Endothelial cell of umbilical vein (primary cell): ENCODE measurements at regions of chr7 and their contacts with region 1.

Region 1: DNA sequence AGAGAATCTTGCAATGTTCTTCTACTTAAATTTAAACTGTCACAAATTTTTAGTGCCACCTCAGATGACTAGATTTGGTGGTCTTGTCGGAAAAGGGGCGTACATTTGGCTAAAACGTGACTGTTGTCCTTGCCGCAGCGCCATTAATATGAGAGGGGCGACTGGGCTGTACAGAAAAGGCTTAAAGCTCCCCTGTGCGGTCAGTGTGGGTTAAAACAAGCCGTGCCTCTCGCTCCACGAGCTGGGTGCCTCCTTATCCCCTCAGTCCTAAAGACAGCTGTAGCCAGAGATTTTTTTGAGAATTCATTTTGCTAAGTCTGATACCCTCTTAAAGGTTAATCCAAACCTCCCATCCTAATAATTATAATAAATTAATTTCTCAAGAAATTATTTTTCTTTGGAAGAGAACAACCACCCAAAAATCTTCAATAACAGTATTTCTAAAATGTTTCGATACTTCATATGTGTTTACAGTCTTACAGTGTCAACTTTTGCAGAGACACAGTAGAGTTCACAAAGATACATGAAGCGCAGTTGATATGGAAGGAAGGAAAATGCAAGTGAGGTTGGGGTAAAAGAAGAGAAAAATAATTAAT is 68.6 kb downstream of the C7orf25 start:
- DNase-seq: peak; percentile 53
- H3K4me3 ChIP-seq: no peak overlapping the region
- H3K27ac ChIP-seq: no peak overlapping the region
- H3K4me1 ChIP-seq: no peaks in the 10 kb centered on the region
- H3K27me3 ChIP-seq: peaks cover 15 to 17% of the 10 kb centered on the region in 2 experiments
- CTCF ChIP-seq: peak; percentile 50 to 61
- POLR2A ChIP-seq: no peak

Region 2: DNA sequence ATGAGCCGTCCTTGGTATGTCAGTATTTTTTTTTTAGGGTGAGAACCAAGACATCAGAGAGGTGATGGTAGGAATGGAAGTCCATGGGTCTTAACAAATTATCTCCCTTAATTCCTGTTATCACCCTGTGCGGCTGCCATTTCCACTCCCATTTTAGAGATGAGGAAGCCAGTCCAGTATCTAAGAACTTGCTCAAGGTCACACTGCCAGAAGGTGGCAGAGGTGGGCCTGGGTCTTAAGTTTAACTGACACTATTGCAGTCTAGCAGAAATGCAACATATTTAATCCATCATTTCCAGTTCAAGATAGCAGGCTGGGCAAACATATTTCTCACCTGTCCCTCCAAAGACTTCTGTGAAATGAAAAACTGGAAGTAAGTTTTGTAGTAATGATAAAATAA is 714.6 kb before region 1 on chr7:
- CTCF ChIA-PET with region 1: no interaction called
- POLR2A ChIA-PET with region 1: no interaction called
- dilution Hi-C with region 1: no loop called
- intact Hi-C with region 1: loop called (anchors 10 kb)
- DNase-seq: peak; percentile 31
- H3K4me3 ChIP-seq: no peak overlapping the region
- H3K27ac ChIP-seq: no peak overlapping the region
- H3K4me1 ChIP-seq: no peaks in the 10 kb centered on the region
- H3K27me3 ChIP-seq: no peaks in the 10 kb centered on the region
- CTCF ChIP-seq: peak in 1 of 2 donors; percentile 29
- POLR2A ChIP-seq: no peak

Region 3: DNA sequence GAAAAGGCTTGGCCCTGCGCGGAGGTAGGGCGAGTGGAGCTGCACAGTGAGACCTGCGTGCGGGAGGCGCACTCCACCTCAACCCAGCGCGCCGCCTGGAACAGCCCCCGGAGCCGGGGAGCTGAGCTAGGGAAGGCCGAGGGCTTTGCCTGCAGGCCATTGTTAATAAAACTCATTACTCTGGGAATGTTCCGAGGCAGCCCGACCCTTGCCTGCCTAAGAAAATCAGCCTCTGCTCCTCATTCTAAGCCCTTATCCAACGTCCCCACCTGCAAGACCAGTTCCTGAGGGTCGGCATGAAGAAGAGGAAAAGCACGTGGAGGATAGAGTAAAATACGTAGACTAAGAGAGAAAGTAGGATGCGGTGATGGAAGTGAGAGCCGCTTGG is 13.3 kb after region 1 on chr7:
- CTCF ChIA-PET with region 1: interaction called, 18 read pairs
- POLR2A ChIA-PET with region 1: no interaction called
- dilution Hi-C with region 1: no loop called
- intact Hi-C with region 1: no loop called
- DNase-seq: peak; percentile 26
- H3K4me3 ChIP-seq: peak overlapping the region; percentile 41 to 73 (median 69)
- H3K27ac ChIP-seq: no peak overlapping the region
- H3K4me1 ChIP-seq: peaks cover 10% of the 10 kb centered on the region
- H3K27me3 ChIP-seq: peaks cover 5 to 9% of the 10 kb centered on the region in 2 experiments
- CTCF ChIP-seq: no peak
- POLR2A ChIP-seq: no peak

Region 4: DNA sequence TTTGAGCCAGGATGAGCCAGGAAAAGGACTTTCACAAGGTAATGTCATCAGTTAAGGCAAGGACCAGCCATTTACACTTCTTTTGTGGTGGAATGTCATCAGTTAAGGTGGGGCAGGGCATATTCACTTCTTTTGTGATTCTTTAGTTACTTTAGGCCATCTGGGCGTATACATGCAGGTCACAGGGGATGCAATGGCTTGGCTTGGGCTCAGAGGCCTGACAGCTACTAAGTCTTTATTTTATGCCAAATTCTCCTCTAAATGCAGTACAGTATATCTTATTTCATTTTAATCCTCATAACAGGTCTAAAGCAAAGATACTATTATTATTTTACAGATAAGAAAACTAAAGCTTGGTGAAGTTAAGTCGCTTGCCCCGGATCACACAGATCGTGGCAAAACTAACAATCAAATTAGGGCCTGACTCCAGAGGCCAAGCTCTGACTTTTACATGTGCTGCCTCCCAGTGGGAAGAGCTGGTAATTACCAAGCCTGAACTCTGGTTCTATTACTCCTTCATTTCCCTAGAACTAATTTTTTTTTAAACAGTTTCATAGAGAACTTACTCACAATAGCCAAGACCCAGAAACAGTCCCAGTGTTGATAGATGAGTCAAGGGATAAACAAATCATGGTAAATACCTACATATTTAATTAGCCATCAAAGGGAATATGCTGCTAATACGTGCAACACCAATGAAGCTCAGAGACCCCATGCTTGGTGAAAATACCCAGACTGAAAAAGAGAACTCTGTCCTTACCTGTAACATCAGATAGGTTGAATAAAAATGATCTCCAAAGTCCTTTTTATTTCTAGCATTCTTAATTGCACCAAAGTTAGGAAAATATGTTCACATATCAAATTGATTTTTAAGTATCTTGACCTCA is 33.1 kb after region 1 on chr7:
- CTCF ChIA-PET with region 1: interaction called, 11 read pairs
- POLR2A ChIA-PET with region 1: no interaction called
- dilution Hi-C with region 1: no loop called
- intact Hi-C with region 1: no loop called
- DNase-seq: peak; percentile 67
- H3K4me3 ChIP-seq: no peak overlapping the region
- H3K27ac ChIP-seq: no peak overlapping the region
- H3K4me1 ChIP-seq: no peaks in the 10 kb centered on the region
- H3K27me3 ChIP-seq: peaks cover 3 to 6% of the 10 kb centered on the region in 2 experiments
- CTCF ChIP-seq: peak; percentile 60 to 68
- POLR2A ChIP-seq: no peak